ENCODE measurements at regions of chr9 and their contacts with region 1.

Region 1: GRCh38 chr9:137286975-137287383 is 9.5 kb downstream of the TOR4A start:
- DNase-seq: peak; percentile 54
- H3K4me3 ChIP-seq: no peak overlapping the region
- H3K27ac ChIP-seq: no peak overlapping the region
- H3K4me1 ChIP-seq: no peaks in the 10 kb centered on the region
- H3K27me3 ChIP-seq: no peaks in the 10 kb centered on the region
- CTCF ChIP-seq: peak; percentile 64 to 72

Region 2: DNA sequence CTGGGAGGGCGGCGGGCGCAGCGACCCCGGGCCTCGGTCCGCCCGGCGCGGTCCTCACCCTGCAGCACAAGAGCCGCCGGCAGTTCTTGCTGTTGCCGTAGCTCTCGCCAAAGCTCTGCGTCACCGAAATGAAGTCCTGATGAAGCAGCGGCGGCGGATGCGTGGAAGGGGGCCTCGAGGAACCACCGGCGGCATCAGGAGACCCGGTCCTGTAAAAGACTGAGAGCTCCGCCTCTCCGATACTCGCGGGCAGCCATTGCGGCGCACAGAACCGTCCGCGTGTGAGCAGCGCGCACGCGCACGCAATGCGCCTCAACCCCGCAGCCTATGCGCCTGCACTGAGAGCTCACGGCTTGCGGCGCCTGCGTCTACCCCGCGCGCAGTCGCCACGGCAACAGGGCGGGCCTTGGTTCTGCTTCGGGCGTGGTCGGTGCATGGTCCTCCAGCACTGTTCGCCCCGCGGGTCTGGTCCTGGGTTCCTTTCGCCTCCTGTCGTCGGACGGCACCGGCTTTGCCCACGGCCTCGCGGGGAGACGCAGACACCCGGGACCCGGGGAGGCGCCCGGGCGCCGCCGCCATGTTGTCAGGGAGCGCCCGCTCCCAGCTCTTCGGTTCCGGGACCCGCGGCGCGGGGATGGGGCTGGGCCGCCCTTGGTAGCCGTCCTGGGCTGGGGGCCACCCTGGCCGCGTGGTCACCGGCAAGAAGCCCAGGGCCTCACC is 157.4 kb before region 1 on chr9:
- CTCF ChIA-PET with region 1: interaction called, 10 read pairs
- dilution Hi-C with region 1: no loop called
- in situ Hi-C with region 1: no loop called
- intact Hi-C with region 1: no loop called
- DNase-seq: peak; percentile 89
- H3K4me3 ChIP-seq: peak overlapping the region; percentile 64 to 83 (median 81)
- H3K27ac ChIP-seq: peak overlapping the region; percentile 53
- H3K4me1 ChIP-seq: peaks cover 14% of the 10 kb centered on the region
- H3K27me3 ChIP-seq: no peaks in the 10 kb centered on the region
- CTCF ChIP-seq: no peak

Region 3: DNA sequence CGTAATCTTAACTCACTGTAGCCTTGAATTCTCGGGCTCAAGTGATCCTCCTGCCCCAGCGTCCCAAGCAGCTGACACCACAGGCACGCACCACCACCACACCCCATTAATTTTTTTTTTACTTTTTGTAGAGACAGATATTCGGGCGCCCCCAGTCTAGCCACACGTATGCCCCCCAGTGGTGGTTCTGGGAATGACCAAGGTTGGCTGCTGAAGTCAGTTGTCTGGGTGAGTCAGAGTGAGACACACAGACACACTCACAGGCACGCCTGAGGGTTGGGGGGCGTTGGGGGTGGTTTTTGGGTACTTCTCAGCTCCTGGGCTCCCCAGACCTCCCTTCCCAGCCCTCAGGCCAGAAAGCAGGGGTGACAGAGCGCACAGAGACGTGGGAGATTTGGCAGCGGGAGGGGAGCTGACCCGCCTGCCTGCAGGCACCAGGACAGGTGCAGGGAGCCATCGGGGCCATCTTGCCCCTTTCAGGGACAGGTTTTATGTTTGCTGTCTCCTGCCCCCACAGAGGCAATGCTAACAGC is 158.4 kb after region 1 on chr9:
- CTCF ChIA-PET with region 1: no interaction called
- dilution Hi-C with region 1: no loop called
- in situ Hi-C with region 1: loop called in 1 of 2 experiments (anchors 10 kb)
- intact Hi-C with region 1: loop called (anchors 2 kb)
- DNase-seq: peak; percentile 81
- H3K4me3 ChIP-seq: no peak overlapping the region
- H3K27ac ChIP-seq: no peak overlapping the region
- H3K4me1 ChIP-seq: peaks cover 17% of the 10 kb centered on the region
- H3K27me3 ChIP-seq: no peaks in the 10 kb centered on the region
- CTCF ChIP-seq: peak; percentile 81 to 83

Region 4: GRCh38 chr9:137516144-137516917 is 229.4 kb after region 1 on chr9:
- CTCF ChIA-PET with region 1: interaction called, 23 read pairs
- dilution Hi-C with region 1: no loop called
- in situ Hi-C with region 1: loop called (anchors 10 kb)
- intact Hi-C with region 1: no loop called
- DNase-seq: no peak
- H3K4me3 ChIP-seq: no peak overlapping the region
- H3K27ac ChIP-seq: no peak overlapping the region
- H3K4me1 ChIP-seq: peaks cover 4% of the 10 kb centered on the region
- H3K27me3 ChIP-seq: no peaks in the 10 kb centered on the region
- CTCF ChIP-seq: no peak

Region 5: DNA sequence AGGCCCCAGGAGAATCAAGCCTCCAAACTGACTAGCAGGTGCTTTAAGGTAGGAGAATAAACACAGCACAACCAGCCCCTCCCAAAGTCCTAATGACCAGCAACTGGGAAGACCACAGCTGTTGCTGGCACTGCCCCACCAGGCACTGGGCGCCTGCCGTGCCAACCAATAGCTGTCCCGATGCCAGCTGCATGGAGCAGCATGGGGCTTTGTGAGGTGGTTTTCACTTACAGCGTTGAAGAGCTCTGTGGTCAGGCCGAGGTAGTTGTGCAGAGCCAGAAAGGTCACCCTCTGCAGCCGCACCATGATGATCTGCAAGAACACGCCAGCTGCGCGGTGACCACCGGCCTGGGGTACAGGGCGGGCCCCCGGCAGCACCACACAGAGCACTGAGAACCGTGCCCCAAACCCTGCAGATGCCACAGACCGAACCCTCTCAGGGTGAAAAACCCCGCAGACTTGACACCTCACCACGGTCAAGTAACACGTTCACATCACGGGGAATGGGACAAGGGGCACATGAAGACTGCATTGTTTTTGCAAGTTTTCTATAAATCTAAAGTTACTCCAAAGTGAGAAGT is 234.5 kb after region 1 on chr9:
- CTCF ChIA-PET with region 1: no interaction called
- dilution Hi-C with region 1: no loop called
- in situ Hi-C with region 1: loop called (anchors 10 kb)
- intact Hi-C with region 1: no loop called
- DNase-seq: no peak
- H3K4me3 ChIP-seq: no peak overlapping the region
- H3K27ac ChIP-seq: no peak overlapping the region
- H3K4me1 ChIP-seq: no peaks in the 10 kb centered on the region
- H3K27me3 ChIP-seq: no peaks in the 10 kb centered on the region
- CTCF ChIP-seq: no peak

Region 6: DNA sequence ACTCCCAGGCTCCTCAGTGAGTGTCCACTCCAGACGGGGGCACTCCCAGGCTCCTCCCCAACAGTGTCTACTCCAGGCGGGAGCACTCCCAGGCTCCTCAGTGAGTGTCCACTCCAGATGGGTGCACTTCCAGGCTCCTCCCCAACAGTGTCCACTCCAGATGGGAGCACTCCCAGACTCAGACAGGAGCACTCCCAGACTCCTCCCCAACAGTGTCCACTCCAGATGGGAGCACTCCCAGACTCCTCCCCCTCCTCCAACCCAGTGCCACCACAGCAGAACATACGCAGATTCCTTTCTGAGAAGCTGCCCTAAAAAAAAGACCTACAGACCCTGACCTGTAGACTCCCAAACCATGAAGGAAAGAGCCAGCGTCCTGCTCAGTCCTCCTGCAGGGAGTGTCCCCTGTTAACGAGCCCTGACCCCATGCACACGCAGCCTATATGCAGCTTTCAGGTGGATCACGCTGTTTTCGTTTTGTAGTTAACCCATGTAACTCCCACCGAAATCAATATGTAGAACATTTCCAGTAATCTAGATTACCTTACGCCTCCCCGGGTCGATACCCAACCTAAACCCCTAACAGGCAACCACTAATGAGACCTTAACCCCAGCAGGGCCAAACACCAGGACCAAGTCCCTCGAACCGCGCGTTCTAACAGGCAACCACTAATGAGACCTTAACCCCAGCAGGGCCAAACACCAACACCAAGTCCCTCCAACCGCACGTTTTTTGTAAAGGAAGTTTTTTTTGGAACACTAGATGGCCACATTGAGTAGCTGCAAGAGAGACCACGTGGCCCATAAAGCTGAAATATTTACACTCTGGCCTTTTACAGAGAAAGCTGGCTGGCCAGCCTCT is 247.5 kb after region 1 on chr9:
- CTCF ChIA-PET with region 1: no interaction called
- dilution Hi-C with region 1: no loop called
- in situ Hi-C with region 1: loop called (anchors 10 kb)
- intact Hi-C with region 1: loop called (anchors 2 kb)
- DNase-seq: peak; percentile 32
- H3K4me3 ChIP-seq: no peak overlapping the region
- H3K27ac ChIP-seq: no peak overlapping the region
- H3K4me1 ChIP-seq: no peaks in the 10 kb centered on the region
- H3K27me3 ChIP-seq: no peaks in the 10 kb centered on the region
- CTCF ChIP-seq: peak; percentile 56 to 73